CD4-positive, alpha-beta memory T cell (primary cell): ENCODE measurements at regions of chr7 and their contacts with region 1.

Region 1: GRCh38 chr7:39054731-39055130 is 77.0 kb downstream of the POU6F2 start:
- DNase-seq: no peak
- H3K4me3 ChIP-seq: no peak overlapping the region
- H3K4me3 Mint-ChIP-seq: no peak overlapping the region
- H3K27ac ChIP-seq: no peak overlapping the region
- H3K27ac Mint-ChIP-seq: no peak overlapping the region
- H3K4me1 ChIP-seq: no peaks in the 10 kb centered on the region
- H3K4me1 Mint-ChIP-seq: no peaks in the 10 kb centered on the region
- H3K27me3 ChIP-seq: no peaks in the 10 kb centered on the region
- H3K27me3 Mint-ChIP-seq: peaks cover 0 to 2% of the 10 kb centered on the region in 2 donors

Region 2: DNA sequence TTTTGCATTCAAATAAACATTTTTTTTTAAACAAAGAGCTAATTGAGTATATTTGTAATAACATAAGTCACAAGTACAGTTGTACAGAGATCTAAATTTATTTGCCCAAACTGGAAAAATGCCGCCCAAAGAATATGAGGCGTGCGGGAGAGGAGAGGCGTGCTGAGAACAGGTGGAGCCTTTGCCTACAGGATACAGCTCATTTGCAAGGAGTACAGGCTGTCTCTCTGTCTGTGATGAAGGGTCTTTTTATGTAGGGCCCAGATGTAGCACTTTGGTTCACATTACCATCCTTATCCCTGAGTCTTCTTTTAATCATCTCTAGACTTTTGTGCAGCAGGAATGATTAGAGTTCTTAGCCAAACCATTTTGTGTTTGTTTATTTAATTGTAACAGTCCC is 18.8 kb before region 1 on chr7:
- CTCF ChIA-PET with region 1: no interaction called
- POLR2A ChIA-PET with region 1: no interaction called
- intact Hi-C with region 1: no loop called
- DNase-seq: no peak
- H3K4me3 ChIP-seq: no peak overlapping the region
- H3K4me3 Mint-ChIP-seq: no peak overlapping the region
- H3K27ac ChIP-seq: no peak overlapping the region
- H3K27ac Mint-ChIP-seq: no peak overlapping the region
- H3K4me1 ChIP-seq: no peaks in the 10 kb centered on the region
- H3K4me1 Mint-ChIP-seq: no peaks in the 10 kb centered on the region
- H3K27me3 ChIP-seq: no peaks in the 10 kb centered on the region
- H3K27me3 Mint-ChIP-seq: no peaks in the 10 kb centered on the region

Region 3: GRCh38 chr7:39414224-39415035 is 359.7 kb after region 1 on chr7:
- CTCF ChIA-PET with region 1: no interaction called
- POLR2A ChIA-PET with region 1: no interaction called
- intact Hi-C with region 1: loop called (anchors 5 kb)
- DNase-seq: peak; percentile 4 to 39 (median 14)
- H3K4me3 ChIP-seq: peak overlapping the region in 1 of 2 donors; percentile 42
- H3K4me3 Mint-ChIP-seq: peak overlapping the region; percentile 75 to 90 (median 84)
- H3K27ac ChIP-seq: no peak overlapping the region
- H3K27ac Mint-ChIP-seq: peak overlapping the region in 2 of 7 donors; percentile 18 to 67
- H3K4me1 ChIP-seq: peaks cover 4% of the 10 kb centered on the region
- H3K4me1 Mint-ChIP-seq: peaks cover 4 to 9% (median 6%) of the 10 kb centered on the region in 4 donors
- H3K27me3 ChIP-seq: no peaks in the 10 kb centered on the region
- H3K27me3 Mint-ChIP-seq: peaks cover 9 to 22% of the 10 kb centered on the region in 2 donors